ENCODE measurements at regions of chr7 and their contacts with region 1.

Region 1: GRCh38 chr7:33824911-33825459 is 80.4 kb upstream of the BMPER start:
- DNase-seq: no peak
- ATAC-seq: no peak
- H3K4me3 ChIP-seq: no peak overlapping the region
- H3K27ac ChIP-seq: no peak overlapping the region
- H3K4me1 ChIP-seq: no peaks in the 10 kb centered on the region
- H3K27me3 ChIP-seq: no peaks in the 10 kb centered on the region
- CTCF ChIP-seq: no peak

Region 2: DNA sequence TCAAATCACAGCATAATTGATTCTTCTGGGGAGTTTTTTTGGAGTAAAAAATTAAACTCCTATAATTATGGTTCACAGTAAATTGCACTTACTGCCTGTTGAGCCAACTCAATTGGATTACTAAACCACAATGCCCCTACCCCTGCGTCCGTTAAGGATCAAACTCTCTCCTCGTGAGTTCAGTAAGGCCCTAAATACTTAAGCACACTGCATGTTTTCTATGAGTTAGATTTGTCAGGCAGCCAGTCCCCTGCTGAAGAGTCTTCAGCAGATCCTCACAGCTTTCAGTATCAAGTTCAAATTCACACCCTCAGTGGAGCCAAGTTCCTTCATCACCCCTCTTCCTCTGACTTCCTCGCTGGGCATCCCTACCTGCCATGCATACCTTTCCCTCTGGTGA is 194.6 kb before region 1 on chr7:
- CTCF ChIA-PET with region 1: no interaction called
- POLR2A ChIA-PET with region 1: no interaction called
- intact Hi-C with region 1: no loop called
- DNase-seq: no peak
- ATAC-seq: no peak
- H3K4me3 ChIP-seq: no peak overlapping the region
- H3K27ac ChIP-seq: no peak overlapping the region
- H3K4me1 ChIP-seq: no peaks in the 10 kb centered on the region; the same call in 1 of the 2 replicates
- H3K27me3 ChIP-seq: no peaks in the 10 kb centered on the region
- CTCF ChIP-seq: no peak

Region 3: DNA sequence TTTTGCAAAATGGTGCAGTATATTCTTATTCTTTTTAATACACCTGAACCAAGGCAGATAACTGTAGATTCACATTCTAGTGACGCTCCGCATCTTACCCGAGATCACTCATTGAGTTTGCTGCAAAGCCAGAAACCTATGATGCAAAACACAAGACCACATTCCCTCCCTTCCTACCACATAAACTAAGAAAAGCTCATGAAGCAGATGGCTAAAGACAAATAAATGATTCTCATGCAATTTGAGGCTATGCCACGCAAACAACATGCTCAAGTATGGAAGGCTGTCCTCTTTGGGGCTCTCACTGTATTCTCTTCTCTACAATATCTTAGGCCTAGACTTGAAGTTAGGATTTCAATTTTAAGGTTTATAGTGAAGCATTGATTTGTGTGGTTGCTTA is 14.6 kb before region 1 on chr7:
- CTCF ChIA-PET with region 1: no interaction called
- POLR2A ChIA-PET with region 1: interaction called, 28 read pairs
- intact Hi-C with region 1: no loop called
- DNase-seq: no peak
- ATAC-seq: no peak
- H3K4me3 ChIP-seq: no peak overlapping the region
- H3K27ac ChIP-seq: no peak overlapping the region
- H3K4me1 ChIP-seq: peaks cover 27% of the 10 kb centered on the region
- H3K27me3 ChIP-seq: no peaks in the 10 kb centered on the region
- CTCF ChIP-seq: no peak

Region 4: DNA sequence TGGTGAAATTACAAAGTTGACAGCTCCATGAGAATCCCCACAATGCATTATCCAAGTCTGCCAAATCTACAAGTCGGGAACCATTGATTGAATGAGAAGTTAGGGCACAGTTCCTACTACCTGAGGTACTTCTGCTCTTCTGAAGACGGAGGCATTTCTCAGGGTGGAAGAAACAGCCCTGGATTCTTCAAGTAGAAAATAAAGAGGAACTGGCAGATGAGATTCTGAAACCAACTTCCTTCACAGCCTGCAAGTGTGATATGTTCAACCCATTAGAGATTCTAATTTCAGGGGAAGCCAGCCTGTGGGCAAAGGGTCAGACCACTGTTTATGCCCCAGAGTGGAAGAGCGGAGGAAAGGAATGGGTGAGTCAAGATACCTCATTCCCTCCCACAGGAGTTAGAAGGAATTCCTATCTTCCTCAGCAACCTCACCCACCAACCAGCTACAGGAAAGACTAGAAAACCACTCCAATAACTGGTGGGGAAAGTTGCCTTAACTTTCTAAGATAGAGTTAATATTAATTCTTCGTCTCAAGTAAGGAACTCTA is 29.9 kb after region 1 on chr7:
- CTCF ChIA-PET with region 1: no interaction called
- POLR2A ChIA-PET with region 1: no interaction called
- intact Hi-C with region 1: no loop called
- DNase-seq: peak; percentile 53
- ATAC-seq: no peak
- H3K4me3 ChIP-seq: no peak overlapping the region
- H3K27ac ChIP-seq: no peak overlapping the region
- H3K4me1 ChIP-seq: peaks cover 15% of the 10 kb centered on the region
- H3K27me3 ChIP-seq: no peaks in the 10 kb centered on the region
- CTCF ChIP-seq: no peak

Measured in PC-3 (cell line).